ENCODE measurements at regions of chr2 and their contacts with region 1.

Region 1: DNA sequence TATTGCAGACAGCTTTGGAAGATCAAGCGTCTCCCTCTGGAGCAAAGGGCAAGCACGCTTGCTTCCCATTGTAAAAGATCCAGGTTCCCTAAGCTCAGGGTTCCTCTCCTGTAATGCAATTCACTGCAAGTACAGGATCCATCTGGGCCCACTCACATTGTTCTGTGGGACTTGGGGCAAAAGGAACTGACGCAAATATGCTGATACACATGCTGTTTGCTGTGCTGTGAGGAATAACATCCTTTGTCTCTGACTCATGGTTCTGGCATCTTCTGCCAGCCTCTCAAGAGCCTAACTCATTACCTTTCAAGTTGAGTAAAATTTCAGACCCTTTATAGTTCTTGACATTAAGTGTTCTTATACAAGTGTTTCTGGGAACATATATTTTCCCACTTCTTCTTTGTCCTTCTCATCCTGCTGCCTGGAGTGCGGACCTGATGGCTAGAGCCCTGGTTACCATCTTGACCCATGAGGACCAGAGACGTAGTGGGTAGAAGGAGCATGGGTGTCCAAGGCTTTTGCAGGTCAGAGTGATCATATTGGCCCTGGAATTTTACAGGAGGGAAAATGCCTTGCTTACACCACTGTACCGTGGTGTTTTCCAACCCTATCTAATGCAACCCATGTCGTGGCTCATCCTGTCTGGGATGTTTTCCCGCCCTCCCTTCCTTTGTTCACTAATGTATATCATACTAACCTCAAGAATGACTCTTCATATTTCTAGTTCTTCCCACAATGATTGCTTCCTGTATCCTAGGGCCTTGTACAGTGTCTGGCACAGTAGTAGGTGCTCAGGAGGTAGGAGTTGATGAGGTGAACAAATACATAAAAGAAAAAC is 145.7 kb upstream of the GLI2 start:
- DNase-seq: peak; percentile 78
- H3K4me3 ChIP-seq: no peak overlapping the region
- H3K27ac ChIP-seq: no peak overlapping the region
- H3K4me1 ChIP-seq: peaks cover 12% of the 10 kb centered on the region
- H3K27me3 ChIP-seq: no peaks in the 10 kb centered on the region
- CTCF ChIP-seq: no peak

Region 2: DNA sequence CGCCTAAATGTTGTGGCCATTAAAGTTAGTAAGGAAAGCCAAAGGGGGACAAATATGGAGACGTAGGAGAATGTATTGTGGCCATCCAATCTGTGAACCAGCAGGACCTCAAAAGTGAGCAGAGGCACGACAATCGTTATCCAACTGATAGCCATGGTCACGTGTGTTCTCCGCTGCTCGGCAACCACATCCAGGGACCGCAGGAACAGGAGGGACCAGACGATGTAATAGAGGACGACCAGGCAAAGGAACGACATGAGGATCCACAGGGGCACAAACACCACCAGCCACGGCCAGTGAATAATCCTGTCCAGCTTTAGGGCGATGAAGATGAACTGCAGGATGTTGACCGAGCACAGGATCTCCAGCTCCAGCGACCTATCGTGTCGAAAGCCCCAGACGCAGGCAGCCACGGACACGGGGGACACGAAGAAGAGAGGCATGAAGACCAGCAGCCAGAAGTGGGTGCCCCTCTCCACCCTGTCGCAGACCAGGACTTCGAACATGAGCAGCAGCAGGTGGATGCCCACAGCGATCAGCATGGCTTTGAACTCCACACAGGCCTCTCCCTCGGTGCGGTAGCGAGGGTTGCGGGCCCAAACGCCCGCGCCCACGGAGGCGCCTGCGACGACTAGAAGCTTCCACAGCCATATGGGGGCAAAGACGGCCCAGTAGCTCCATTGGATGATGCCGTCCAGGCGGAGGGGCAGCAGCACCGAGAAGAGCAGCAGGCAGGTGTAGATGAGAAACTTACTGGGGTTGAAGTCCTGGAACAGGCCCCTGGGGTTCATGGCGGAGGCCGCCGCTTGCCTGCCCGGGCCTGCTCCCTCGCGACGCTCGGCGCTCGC is 367.6 kb before region 1 on chr2:
- CTCF ChIA-PET with region 1: no interaction called
- dilution Hi-C with region 1: no loop called
- in situ Hi-C with region 1: no loop called
- intact Hi-C with region 1: no loop called
- DNase-seq: no peak
- H3K4me3 ChIP-seq: peak overlapping the region; percentile 9 to 64 (median 60)
- H3K27ac ChIP-seq: no peak overlapping the region
- H3K4me1 ChIP-seq: peaks cover 19% of the 10 kb centered on the region
- H3K27me3 ChIP-seq: no peaks in the 10 kb centered on the region
- CTCF ChIP-seq: no peak

Region 3: DNA sequence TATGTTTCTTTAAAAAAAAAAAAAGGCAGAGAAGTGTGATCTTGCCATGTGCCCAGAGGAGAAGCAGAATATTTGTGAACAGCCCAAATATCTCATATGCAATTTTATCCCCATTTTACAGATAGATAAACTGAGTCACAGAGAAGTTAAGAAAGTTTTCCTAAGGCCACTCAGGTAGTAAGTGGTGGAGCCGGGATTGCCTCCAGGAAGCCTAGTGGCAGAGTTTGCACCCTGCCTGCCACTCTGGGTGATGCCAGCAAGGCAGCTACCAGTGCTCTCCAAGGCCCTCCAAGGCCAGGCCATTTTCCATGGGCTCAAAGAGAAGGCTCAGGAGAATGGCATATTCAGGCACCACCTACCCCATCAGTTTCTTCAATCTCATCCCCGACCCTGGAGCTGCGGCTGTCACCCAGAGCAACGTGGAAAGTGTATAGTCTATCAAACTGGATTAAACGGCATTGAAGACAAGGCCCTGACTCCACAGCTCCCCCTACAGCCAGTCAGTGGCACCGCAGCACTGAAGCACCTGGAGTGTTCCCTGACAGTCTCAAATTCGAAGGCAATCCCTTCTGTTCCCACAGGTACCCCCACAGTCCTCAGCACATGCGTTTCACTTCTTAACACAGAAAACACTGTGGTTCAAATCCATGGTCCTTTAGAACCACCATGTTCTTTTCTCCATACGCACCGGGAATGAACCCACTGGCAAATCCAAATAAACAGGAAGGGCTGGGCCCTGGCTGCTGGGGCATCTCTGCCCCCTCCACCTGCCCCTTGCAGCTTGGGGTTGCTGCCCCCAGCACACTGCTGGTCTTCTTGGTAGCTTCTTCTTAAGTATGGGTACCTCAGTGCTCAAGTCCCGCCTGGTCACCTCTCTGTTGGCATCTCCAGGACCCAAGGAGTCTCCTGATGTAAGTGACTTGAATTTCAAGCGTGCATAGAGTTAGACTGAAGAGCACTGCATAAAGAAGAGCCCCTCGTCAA is 68.8 kb before region 1 on chr2:
- CTCF ChIA-PET with region 1: no interaction called
- dilution Hi-C with region 1: loop called (anchors 5 kb)
- in situ Hi-C with region 1: no loop called
- intact Hi-C with region 1: no loop called
- DNase-seq: peak; percentile 24
- H3K4me3 ChIP-seq: no peak overlapping the region
- H3K27ac ChIP-seq: no peak overlapping the region
- H3K4me1 ChIP-seq: no peaks in the 10 kb centered on the region
- H3K27me3 ChIP-seq: no peaks in the 10 kb centered on the region
- CTCF ChIP-seq: peak; percentile 89 to 98

Region 4: GRCh38 chr2:120620025-120620793 is 30.2 kb after region 1 on chr2:
- CTCF ChIA-PET with region 1: no interaction called
- dilution Hi-C with region 1: no loop called
- in situ Hi-C with region 1: no loop called
- intact Hi-C with region 1: loop called (anchors 5 kb)
- DNase-seq: peak; percentile 94
- H3K4me3 ChIP-seq: no peak overlapping the region
- H3K27ac ChIP-seq: peak overlapping the region; percentile 91
- H3K4me1 ChIP-seq: peaks cover 18% of the 10 kb centered on the region
- H3K27me3 ChIP-seq: no peaks in the 10 kb centered on the region
- CTCF ChIP-seq: no peak

Region 5: DNA sequence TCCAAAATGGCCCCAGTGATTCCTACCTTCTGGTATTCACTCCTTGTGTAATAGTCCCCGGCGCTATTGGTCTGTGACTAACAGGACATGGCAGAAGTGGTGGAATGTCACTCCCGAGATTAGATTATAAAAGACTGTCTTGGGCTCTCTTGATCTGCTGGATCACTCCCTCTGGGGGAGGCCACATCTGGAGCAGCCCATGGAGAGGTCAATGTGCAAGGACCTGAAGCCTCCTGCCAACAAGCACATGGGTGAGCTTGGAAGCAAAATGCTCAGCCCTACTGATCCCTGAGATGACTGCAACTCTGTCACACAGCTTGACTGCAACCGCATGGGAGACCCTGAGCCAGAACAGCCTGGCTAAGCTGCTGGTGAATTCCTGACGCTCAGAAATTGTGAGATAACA is 51.4 kb after region 1 on chr2:
- CTCF ChIA-PET with region 1: no interaction called
- dilution Hi-C with region 1: loop called (anchors 5 kb)
- in situ Hi-C with region 1: no loop called
- intact Hi-C with region 1: no loop called
- DNase-seq: no peak
- H3K4me3 ChIP-seq: no peak overlapping the region
- H3K27ac ChIP-seq: no peak overlapping the region
- H3K4me1 ChIP-seq: no peaks in the 10 kb centered on the region
- H3K27me3 ChIP-seq: no peaks in the 10 kb centered on the region
- CTCF ChIP-seq: no peak

Region 6: GRCh38 chr2:120729406-120730399 is 139.7 kb after region 1 on chr2:
- CTCF ChIA-PET with region 1: no interaction called
- dilution Hi-C with region 1: no loop called
- in situ Hi-C with region 1: no loop called
- intact Hi-C with region 1: no loop called
- DNase-seq: peak; percentile 52
- H3K4me3 ChIP-seq: no peak overlapping the region
- H3K27ac ChIP-seq: no peak overlapping the region
- H3K4me1 ChIP-seq: no peaks in the 10 kb centered on the region
- H3K27me3 ChIP-seq: peaks cover 8% of the 10 kb centered on the region
- CTCF ChIP-seq: no peak

Region 7: GRCh38 chr2:121044412-121044811 is 454.4 kb after region 1 on chr2:
- CTCF ChIA-PET with region 1: no interaction called
- dilution Hi-C with region 1: no loop called
- in situ Hi-C with region 1: no loop called
- intact Hi-C with region 1: no loop called
- DNase-seq: no peak
- H3K4me3 ChIP-seq: no peak overlapping the region
- H3K27ac ChIP-seq: no peak overlapping the region
- H3K4me1 ChIP-seq: no peaks in the 10 kb centered on the region
- H3K27me3 ChIP-seq: no peaks in the 10 kb centered on the region
- CTCF ChIP-seq: peak in 1 of 2 donors; percentile 33

Region 8: DNA sequence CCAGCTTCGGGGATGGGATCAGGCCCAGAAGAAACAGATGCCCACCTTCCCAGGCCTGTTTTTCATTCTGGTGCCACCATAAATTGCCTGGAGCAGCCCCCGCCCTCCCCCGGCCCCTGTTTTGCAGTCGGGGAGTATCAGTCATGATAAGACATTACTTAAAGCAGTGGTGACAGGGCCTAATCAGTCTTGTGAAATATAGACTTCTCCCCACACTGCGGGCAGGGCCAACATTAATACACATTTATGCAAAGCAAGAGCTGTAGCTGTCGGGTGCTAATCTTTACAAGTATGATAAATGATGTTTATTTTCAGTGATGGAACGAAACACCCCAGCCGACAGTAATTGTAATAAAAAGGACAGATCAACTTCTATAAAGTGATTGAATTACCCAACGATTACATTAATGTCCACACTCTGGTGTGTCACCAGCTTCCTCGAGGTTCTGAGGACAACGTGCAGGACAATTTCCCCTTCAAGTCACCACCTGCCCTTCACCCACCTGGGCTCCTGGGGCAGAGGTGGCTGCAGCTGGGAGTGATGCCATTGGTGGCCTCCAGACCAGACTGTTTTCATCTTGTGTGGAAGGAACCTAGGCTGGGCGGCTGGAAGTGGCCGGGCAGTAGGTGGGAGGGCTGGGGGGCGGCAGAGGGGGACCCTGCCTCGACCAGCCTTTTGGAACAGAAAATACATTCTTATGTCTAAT is 469.0 kb after region 1 on chr2:
- CTCF ChIA-PET with region 1: no interaction called
- dilution Hi-C with region 1: no loop called
- in situ Hi-C with region 1: no loop called
- intact Hi-C with region 1: no loop called
- DNase-seq: no peak
- H3K4me3 ChIP-seq: no peak overlapping the region
- H3K27ac ChIP-seq: no peak overlapping the region
- H3K4me1 ChIP-seq: no peaks in the 10 kb centered on the region
- H3K27me3 ChIP-seq: peaks cover 3% of the 10 kb centered on the region
- CTCF ChIP-seq: no peak

Measured in mammary epithelial cell (primary cell).